ENCODE measurements at regions of chrX and their contacts with region 1.

Region 1: GRCh38 chrX:48737213-48737938 is 24.2 kb upstream of the GLOD5 start:
- DNase-seq: peak; percentile 92
- H3K4me3 Mint-ChIP-seq: peak overlapping the region; percentile 95
- H3K27ac Mint-ChIP-seq: peak overlapping the region; percentile 94
- H3K4me1 Mint-ChIP-seq: peaks cover 17% of the 10 kb centered on the region
- H3K27me3 Mint-ChIP-seq: no peaks in the 10 kb centered on the region

Region 2: GRCh38 chrX:47595716-47596251 is 1141.6 kb before region 1 on chrX:
- CTCF ChIA-PET with region 1: no interaction called
- intact Hi-C with region 1: no loop called
- DNase-seq: no peak
- H3K4me3 Mint-ChIP-seq: no peak overlapping the region
- H3K27ac Mint-ChIP-seq: peak overlapping the region; percentile 73
- H3K4me1 Mint-ChIP-seq: peaks cover 13% of the 10 kb centered on the region
- H3K27me3 Mint-ChIP-seq: no peaks in the 10 kb centered on the region

Region 3: GRCh38 chrX:48665991-48666390 is 71.4 kb before region 1 on chrX:
- CTCF ChIA-PET with region 1: no interaction called
- intact Hi-C with region 1: no loop called
- DNase-seq: no peak
- H3K4me3 Mint-ChIP-seq: no peak overlapping the region
- H3K27ac Mint-ChIP-seq: no peak overlapping the region
- H3K4me1 Mint-ChIP-seq: peaks cover 2% of the 10 kb centered on the region
- H3K27me3 Mint-ChIP-seq: no peaks in the 10 kb centered on the region

Region 4: GRCh38 chrX:48676106-48676892 is 61.1 kb before region 1 on chrX:
- CTCF ChIA-PET with region 1: no interaction called
- intact Hi-C with region 1: loop called (anchors 1 kb)
- DNase-seq: peak; percentile 90
- H3K4me3 Mint-ChIP-seq: peak overlapping the region; percentile 90
- H3K27ac Mint-ChIP-seq: peak overlapping the region; percentile 91
- H3K4me1 Mint-ChIP-seq: peaks cover 25% of the 10 kb centered on the region
- H3K27me3 Mint-ChIP-seq: no peaks in the 10 kb centered on the region

Region 5: DNA sequence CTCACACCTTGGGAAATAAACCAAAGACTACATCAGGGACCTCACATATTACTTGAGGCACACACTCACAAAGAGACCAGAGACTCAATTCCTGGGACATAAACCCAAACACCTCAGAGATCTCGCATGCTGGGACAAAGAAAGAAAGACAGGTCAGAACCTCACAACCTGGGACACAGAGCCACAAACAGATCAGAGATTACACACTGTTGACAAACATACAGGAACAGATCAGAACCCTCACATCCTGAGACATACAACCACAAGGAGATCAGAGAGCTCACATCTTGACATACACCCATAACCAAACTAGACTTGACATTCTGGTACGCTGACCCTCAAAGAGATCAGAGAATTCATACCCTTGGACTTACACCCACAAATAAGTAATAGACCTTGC is 23.5 kb before region 1 on chrX:
- CTCF ChIA-PET with region 1: no interaction called
- intact Hi-C with region 1: loop called (anchors 1 kb)
- DNase-seq: peak; percentile 10
- H3K4me3 Mint-ChIP-seq: peak overlapping the region; percentile 3
- H3K27ac Mint-ChIP-seq: peak overlapping the region; percentile 69
- H3K4me1 Mint-ChIP-seq: peaks cover 77% of the 10 kb centered on the region
- H3K27me3 Mint-ChIP-seq: no peaks in the 10 kb centered on the region

Region 6: GRCh38 chrX:48917139-48918001 is 180.0 kb after region 1 on chrX:
- CTCF ChIA-PET with region 1: no interaction called
- intact Hi-C with region 1: no loop called
- DNase-seq: peak; percentile 92
- H3K4me3 Mint-ChIP-seq: peak overlapping the region; percentile 95
- H3K27ac Mint-ChIP-seq: peak overlapping the region; percentile 99
- H3K4me1 Mint-ChIP-seq: peaks cover 39% of the 10 kb centered on the region
- H3K27me3 Mint-ChIP-seq: peaks cover 2% of the 10 kb centered on the region

Region 7: GRCh38 chrX:48937054-48937907 is 199.9 kb after region 1 on chrX:
- CTCF ChIA-PET with region 1: interaction called, 3 read pairs
- intact Hi-C with region 1: loop called (anchors 1 kb)
- DNase-seq: peak; percentile 95
- H3K4me3 Mint-ChIP-seq: peak overlapping the region; percentile 75
- H3K27ac Mint-ChIP-seq: peak overlapping the region; percentile 100
- H3K4me1 Mint-ChIP-seq: peaks cover 81% of the 10 kb centered on the region
- H3K27me3 Mint-ChIP-seq: no peaks in the 10 kb centered on the region

Measured in activated naive CD4-positive, alpha-beta T cell treated with anti-CD3 and anti-CD28 coated beads for 36 hours (primary cell).